ENCODE measurements at regions of chrX and their contacts with region 1.

Region 1: GRCh38 chrX:11944501-11944900 is 186.5 kb downstream of the MSL3 start:
- DNase-seq: peak; percentile 15
- H3K4me3 ChIP-seq: no peak overlapping the region
- H3K27ac ChIP-seq: no peak overlapping the region
- H3K4me1 ChIP-seq: peaks cover 3% of the 10 kb centered on the region
- H3K27me3 ChIP-seq: no peaks in the 10 kb centered on the region
- CTCF ChIP-seq: peak; percentile 54 to 63
- POLR2A ChIP-seq: no peak

Region 2: GRCh38 chrX:11929476-11929875 is 15.0 kb before region 1 on chrX:
- CTCF ChIA-PET with region 1: interaction called, 14 read pairs
- POLR2A ChIA-PET with region 1: no interaction called
- dilution Hi-C with region 1: no loop called
- intact Hi-C with region 1: no loop called
- DNase-seq: peak; percentile 5
- H3K4me3 ChIP-seq: no peak overlapping the region
- H3K27ac ChIP-seq: no peak overlapping the region
- H3K4me1 ChIP-seq: peaks cover 12% of the 10 kb centered on the region
- H3K27me3 ChIP-seq: no peaks in the 10 kb centered on the region
- CTCF ChIP-seq: no peak
- POLR2A ChIP-seq: no peak